Endothelial cell of umbilical vein (primary cell): ENCODE measurements at regions of chr3 and their contacts with region 1.

Region 1: DNA sequence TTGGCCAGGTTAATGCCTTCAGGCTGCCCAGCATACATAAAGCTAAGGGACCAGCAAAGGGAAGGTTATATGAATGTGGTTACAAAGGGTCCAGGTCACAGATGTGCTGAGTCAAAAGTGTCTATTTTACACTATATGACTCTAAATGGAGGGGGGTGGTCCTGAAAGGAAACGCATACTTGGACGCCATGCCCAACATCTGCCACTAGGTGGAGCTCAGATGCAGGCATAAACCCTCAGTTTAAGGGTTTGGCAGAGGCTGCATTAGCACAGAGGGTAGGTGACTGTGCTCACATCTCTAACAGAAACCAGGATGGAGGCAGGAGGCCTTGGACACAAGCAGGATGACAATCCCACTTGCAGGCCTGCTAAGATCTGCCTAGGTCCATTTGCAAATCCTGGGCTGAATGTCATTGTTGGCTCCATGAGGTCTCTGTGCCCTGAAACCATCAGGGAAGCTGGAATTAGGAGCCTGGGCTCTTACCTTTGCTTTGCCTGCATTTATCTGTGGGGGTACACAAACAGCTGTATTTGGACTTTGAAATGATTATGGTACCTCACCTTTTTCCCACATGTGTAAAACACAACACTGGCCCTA is 55.8 kb downstream of the ZNF621 start:
- DNase-seq: peak; percentile 72
- H3K4me3 ChIP-seq: no peak overlapping the region
- H3K27ac ChIP-seq: no peak overlapping the region
- H3K4me1 ChIP-seq: no peaks in the 10 kb centered on the region
- H3K27me3 ChIP-seq: peaks cover 0 to 4% of the 10 kb centered on the region in 2 experiments
- CTCF ChIP-seq: peak; percentile 84 to 96
- POLR2A ChIP-seq: no peak

Region 2: DNA sequence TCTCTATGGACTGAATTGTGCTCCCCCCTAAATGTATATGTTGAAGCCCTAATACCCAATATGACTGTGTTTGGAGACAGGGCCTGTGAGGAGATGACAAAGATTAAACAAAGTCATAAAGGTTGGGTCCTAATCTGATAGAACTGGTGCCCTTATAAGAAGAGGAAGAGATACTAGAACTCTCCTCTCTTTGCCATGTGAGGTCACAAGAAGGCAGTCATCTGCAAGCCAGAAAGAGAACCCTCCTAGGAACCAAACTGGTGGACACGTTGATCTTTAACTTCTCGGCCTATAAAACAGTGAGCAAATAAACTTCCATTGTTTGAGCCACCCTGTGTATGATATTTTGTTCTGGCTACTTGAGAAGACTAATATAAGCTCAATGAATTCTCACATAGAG is 225.2 kb before region 1 on chr3:
- CTCF ChIA-PET with region 1: no interaction called
- POLR2A ChIA-PET with region 1: no interaction called
- dilution Hi-C with region 1: no loop called
- intact Hi-C with region 1: no loop called
- DNase-seq: no peak
- H3K4me3 ChIP-seq: no peak overlapping the region
- H3K27ac ChIP-seq: no peak overlapping the region
- H3K4me1 ChIP-seq: no peaks in the 10 kb centered on the region
- H3K27me3 ChIP-seq: peaks cover 2 to 4% of the 10 kb centered on the region in 2 experiments
- CTCF ChIP-seq: no peak
- POLR2A ChIP-seq: no peak

Region 3: GRCh38 chr3:40920041-40920440 is 339.4 kb after region 1 on chr3:
- CTCF ChIA-PET with region 1: no interaction called
- POLR2A ChIA-PET with region 1: no interaction called
- dilution Hi-C with region 1: no loop called
- intact Hi-C with region 1: loop called (anchors 1 kb)
- DNase-seq: no peak
- H3K4me3 ChIP-seq: no peak overlapping the region
- H3K27ac ChIP-seq: no peak overlapping the region
- H3K4me1 ChIP-seq: peaks cover 4% of the 10 kb centered on the region
- H3K27me3 ChIP-seq: no peaks in the 10 kb centered on the region
- CTCF ChIP-seq: no peak
- POLR2A ChIP-seq: no peak

Region 4: GRCh38 chr3:41224120-41224806 is 643.7 kb after region 1 on chr3:
- CTCF ChIA-PET with region 1: no interaction called
- POLR2A ChIA-PET with region 1: no interaction called
- dilution Hi-C with region 1: no loop called
- intact Hi-C with region 1: loop called (anchors 5 kb)
- DNase-seq: no peak
- H3K4me3 ChIP-seq: no peak overlapping the region
- H3K27ac ChIP-seq: no peak overlapping the region
- H3K4me1 ChIP-seq: peaks cover 4% of the 10 kb centered on the region
- H3K27me3 ChIP-seq: no peaks in the 10 kb centered on the region
- CTCF ChIP-seq: no peak
- POLR2A ChIP-seq: no peak

Region 5: DNA sequence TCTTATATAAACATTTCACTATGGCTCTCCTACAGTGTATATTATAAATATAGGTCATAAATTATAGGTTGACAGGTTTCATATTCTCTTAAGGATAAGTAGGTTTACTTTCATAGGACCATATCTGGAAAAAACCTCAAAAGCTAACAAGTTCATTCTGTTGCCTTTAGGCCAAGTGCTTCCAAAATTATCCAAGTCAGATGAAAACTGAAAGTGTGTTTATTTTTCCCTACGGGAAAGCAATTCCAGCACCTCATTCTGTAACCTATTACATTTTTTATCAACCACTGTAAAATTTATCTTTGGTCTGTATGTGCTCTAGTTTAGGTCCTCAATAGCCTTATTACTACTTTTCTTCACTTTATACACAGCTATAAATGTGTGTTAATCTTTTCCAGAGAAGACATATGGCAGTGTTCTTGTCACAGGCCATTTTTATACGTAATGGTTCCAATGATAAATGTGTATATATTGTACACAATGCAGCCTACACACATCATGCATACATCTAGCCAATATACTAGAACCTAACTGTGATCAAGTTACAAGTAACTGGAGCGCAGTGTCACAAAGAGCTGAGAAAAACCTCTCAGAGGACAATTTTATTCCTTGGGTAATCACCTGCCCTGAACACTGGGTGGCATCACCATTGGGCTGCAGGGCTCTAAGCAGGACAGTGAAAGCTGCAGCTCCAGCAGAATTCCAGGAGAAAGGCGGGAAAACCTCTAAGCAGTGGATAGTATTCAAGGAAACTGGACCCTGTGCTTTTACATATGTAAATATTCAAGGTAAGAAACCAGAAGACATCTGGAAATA is 870.0 kb after region 1 on chr3:
- CTCF ChIA-PET with region 1: no interaction called
- POLR2A ChIA-PET with region 1: no interaction called
- dilution Hi-C with region 1: no loop called
- intact Hi-C with region 1: no loop called
- DNase-seq: no peak
- H3K4me3 ChIP-seq: no peak overlapping the region
- H3K27ac ChIP-seq: no peak overlapping the region
- H3K4me1 ChIP-seq: no peaks in the 10 kb centered on the region
- H3K27me3 ChIP-seq: no peaks in the 10 kb centered on the region
- CTCF ChIP-seq: no peak
- POLR2A ChIP-seq: no peak

Region 6: DNA sequence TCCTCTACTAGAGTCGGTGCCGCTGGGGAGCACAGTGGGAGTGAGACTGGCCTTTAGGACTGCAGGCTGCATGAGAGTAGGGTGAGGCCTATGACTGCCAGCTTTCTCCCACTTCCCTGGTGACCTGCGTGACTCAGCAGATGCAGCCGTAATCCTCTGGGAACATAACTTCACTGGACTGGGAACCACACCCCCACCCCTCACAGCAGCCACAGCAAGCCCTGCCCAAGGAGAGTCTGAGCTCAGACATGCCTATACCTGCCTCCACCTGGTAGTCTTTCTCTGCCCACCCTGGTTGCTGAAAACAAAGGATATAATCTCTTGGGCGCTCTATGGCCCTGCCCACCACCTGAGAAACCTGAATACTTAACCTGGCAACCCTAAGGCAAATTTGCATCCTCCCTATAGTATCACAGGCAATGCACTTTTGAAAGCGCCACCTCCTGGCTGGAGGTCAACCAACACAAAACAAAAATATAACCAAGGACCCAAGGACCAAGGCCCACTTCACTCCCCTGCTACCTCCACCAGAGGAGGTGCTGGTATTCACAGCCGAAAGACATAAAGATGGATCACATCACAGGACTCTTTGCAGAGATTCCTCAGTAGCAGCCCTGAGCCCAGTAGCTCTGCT is 927.6 kb after region 1 on chr3:
- CTCF ChIA-PET with region 1: no interaction called
- POLR2A ChIA-PET with region 1: no interaction called
- dilution Hi-C with region 1: no loop called
- intact Hi-C with region 1: loop called (anchors 5 kb)
- DNase-seq: no peak
- H3K4me3 ChIP-seq: no peak overlapping the region
- H3K27ac ChIP-seq: no peak overlapping the region
- H3K4me1 ChIP-seq: no peaks in the 10 kb centered on the region
- H3K27me3 ChIP-seq: no peaks in the 10 kb centered on the region
- CTCF ChIP-seq: no peak
- POLR2A ChIP-seq: no peak

Region 7: GRCh38 chr3:41881233-41881821 is 1300.7 kb after region 1 on chr3:
- CTCF ChIA-PET with region 1: interaction called, 91 read pairs
- POLR2A ChIA-PET with region 1: no interaction called
- dilution Hi-C with region 1: no loop called
- intact Hi-C with region 1: loop called (anchors 1 kb)
- DNase-seq: peak; percentile 60
- H3K4me3 ChIP-seq: no peak overlapping the region
- H3K27ac ChIP-seq: no peak overlapping the region
- H3K4me1 ChIP-seq: no peaks in the 10 kb centered on the region
- H3K27me3 ChIP-seq: no peaks in the 10 kb centered on the region
- CTCF ChIP-seq: peak; percentile 13 to 28
- POLR2A ChIP-seq: no peak